ENCODE measurements at regions of chr6 and their contacts with region 1.

Region 1: GRCh38 chr6:82095091-82095490 is 152.5 kb downstream of the IBTK start:
- DNase-seq: no peak
- H3K4me3 ChIP-seq: no peak overlapping the region
- H3K27ac ChIP-seq: no peak overlapping the region
- H3K4me1 ChIP-seq: no peaks in the 10 kb centered on the region
- H3K27me3 ChIP-seq: no peaks in the 10 kb centered on the region
- CTCF ChIP-seq: 0 out of 2 replicates have a peak, but pooled peaks have one; percentile 11

Region 2: DNA sequence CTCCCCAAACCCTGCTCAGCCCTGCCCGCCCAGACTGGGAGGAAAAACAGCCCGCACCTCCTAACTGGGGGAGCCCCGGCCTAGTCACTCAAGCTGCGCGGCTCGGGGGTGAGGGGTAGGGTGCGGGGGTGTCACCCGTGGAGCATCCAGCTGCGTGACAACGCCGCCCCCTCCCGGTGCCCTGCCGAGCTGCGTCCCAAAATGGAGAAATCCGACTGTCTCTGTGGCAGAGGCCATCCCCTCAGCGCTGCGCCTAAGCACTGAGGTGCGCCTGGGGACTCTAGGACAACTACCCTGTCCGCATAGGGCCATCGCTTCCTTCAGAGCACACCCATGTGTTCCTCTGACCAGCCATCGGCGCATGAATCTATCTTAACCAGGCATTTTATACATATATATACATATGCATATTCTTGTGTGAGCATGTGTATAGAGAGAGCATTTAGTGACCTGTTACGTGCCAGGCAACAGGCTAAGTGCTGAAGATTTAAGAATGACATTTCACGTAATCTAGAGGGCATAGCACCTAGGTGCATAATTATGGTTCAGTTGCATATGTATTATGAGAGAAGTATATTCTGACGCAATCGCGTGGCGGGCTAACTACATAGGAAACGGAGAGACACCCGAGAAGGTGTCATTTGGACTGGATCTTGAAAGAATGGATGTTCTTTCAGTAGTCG is 341.1 kb before region 1 on chr6:
- CTCF ChIA-PET with region 1: no interaction called
- POLR2A ChIA-PET with region 1: no interaction called
- intact Hi-C with region 1: no loop called
- DNase-seq: no peak
- H3K4me3 ChIP-seq: peak overlapping the region; percentile 68
- H3K27ac ChIP-seq: peak overlapping the region; percentile 82
- H3K4me1 ChIP-seq: peaks cover 8% of the 10 kb centered on the region
- H3K27me3 ChIP-seq: no peaks in the 10 kb centered on the region
- CTCF ChIP-seq: peak; percentile 82

Region 3: DNA sequence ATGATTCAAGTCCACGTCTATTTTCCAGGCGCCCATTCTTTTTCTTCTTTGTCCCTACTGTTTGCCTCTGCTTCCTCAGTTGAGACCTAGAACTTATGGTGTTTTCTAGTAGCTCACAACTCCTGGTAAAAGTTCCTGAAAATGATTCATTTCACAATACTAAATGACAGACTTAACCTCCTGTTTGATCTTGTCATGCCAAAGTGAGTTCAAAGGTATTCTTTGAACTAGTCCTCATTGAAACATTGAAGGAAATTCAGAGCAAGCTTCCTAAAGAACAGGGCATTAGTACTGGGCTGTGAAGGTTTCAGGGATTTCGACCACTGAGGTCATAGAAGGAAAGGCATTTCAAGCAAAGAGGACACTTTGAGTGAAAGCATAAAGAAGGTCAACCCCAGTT is 19.7 kb after region 1 on chr6:
- CTCF ChIA-PET with region 1: no interaction called
- POLR2A ChIA-PET with region 1: no interaction called
- intact Hi-C with region 1: loop called (anchors 2 kb)
- DNase-seq: no peak
- H3K4me3 ChIP-seq: no peak overlapping the region
- H3K27ac ChIP-seq: no peak overlapping the region
- H3K4me1 ChIP-seq: peaks cover 22% of the 10 kb centered on the region
- H3K27me3 ChIP-seq: no peaks in the 10 kb centered on the region
- CTCF ChIP-seq: no peak

Region 4: GRCh38 chr6:82182756-82183155 is 87.7 kb after region 1 on chr6:
- CTCF ChIA-PET with region 1: no interaction called
- POLR2A ChIA-PET with region 1: no interaction called
- intact Hi-C with region 1: no loop called
- DNase-seq: no peak
- H3K4me3 ChIP-seq: no peak overlapping the region
- H3K27ac ChIP-seq: no peak overlapping the region
- H3K4me1 ChIP-seq: peaks cover 19% of the 10 kb centered on the region
- H3K27me3 ChIP-seq: no peaks in the 10 kb centered on the region
- CTCF ChIP-seq: no peak